ENCODE measurements at regions of chr2 and their contacts with region 1.

Region 1: DNA sequence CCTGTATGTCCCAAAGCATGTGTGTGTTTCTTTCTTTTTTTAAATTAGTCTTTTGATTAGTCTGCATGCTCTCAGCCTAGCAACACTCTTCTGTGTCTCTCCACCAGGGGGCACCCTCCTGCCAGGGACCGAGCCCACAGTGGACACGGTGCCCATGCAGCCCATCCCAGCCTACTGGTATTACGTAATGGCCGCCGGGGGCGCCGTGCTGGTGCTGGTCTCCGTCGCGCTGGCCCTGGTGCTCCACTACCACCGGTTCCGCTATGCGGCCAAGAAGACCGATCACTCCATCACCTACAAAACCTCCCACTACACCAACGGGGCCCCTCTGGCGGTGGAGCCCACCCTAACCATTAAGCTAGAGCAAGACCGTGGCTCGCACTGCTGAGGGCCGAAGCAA is 93.8 kb downstream of the NRP2 start:
- DNase-seq: peak; percentile 57
- CTCF ChIP-seq: peak; percentile 69

Region 2: GRCh38 chr2:204982303-204982702 is 793.8 kb before region 1 on chr2:
- CTCF ChIA-PET with region 1: no interaction called
- POLR2A ChIA-PET with region 1: interaction called, 12 read pairs
- DNase-seq: no peak
- CTCF ChIP-seq: no peak

Region 3: GRCh38 chr2:205885492-205886099 is 109.5 kb after region 1 on chr2:
- CTCF ChIA-PET with region 1: interaction called, 51 read pairs
- POLR2A ChIA-PET with region 1: no interaction called
- DNase-seq: peak; percentile 80
- CTCF ChIP-seq: peak; percentile 95

Region 4: DNA sequence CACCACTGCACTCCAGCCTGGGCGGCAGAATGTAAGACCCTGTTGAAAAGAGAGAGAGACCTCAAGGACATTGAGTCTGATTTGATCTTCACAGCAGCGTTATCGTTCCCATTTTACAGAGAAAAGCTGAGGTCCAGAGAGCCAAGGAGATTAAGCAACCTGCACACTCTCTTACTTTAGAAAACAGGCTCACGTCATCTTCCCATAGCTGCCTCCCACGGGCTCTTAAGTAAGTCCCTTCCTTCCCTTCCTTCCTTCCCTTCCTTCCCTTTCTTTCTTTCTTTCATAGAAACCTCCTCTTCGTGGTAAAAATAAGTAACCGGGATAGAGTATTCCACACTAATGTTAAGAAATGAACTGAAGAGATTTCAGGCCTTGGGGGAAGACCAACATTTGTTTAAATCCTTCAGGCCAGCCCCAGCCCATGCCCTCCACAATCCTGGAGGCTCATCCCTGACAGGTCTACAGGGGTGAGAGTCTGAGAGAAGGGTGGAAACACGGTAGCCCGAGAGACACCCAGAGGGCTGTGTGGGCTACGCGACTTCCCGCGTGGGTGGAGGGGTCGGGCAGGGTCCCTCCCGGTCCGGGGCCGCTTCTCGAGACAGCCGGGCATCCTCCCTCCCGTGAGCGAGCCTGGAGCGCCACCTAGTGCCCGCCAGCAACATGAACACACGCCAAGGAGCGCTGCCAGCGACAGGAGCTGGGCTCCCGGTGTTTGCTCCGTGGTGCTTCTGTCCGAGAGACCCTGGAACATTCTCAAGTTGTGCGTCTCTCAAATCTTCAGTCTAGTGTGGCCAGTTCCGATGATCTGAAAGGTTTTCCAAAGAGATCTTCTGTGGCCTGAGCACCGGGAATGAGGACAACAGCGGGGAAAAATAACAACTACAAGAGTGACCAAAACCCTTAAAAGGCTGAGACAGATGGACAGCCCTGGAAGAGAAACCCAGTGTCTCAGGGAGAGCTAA is 149.5 kb after region 1 on chr2:
- CTCF ChIA-PET with region 1: interaction called, 20 read pairs
- POLR2A ChIA-PET with region 1: no interaction called
- DNase-seq: peak; percentile 80
- CTCF ChIP-seq: peak; percentile 87